ENCODE measurements at regions of chr9 and their contacts with region 1.

Region 1: GRCh38 chr9:129726322-129727160 is 26.3 kb downstream of the PTGES start:
- DNase-seq: peak; percentile 87
- CTCF ChIP-seq: peak; percentile 85

Region 2: DNA sequence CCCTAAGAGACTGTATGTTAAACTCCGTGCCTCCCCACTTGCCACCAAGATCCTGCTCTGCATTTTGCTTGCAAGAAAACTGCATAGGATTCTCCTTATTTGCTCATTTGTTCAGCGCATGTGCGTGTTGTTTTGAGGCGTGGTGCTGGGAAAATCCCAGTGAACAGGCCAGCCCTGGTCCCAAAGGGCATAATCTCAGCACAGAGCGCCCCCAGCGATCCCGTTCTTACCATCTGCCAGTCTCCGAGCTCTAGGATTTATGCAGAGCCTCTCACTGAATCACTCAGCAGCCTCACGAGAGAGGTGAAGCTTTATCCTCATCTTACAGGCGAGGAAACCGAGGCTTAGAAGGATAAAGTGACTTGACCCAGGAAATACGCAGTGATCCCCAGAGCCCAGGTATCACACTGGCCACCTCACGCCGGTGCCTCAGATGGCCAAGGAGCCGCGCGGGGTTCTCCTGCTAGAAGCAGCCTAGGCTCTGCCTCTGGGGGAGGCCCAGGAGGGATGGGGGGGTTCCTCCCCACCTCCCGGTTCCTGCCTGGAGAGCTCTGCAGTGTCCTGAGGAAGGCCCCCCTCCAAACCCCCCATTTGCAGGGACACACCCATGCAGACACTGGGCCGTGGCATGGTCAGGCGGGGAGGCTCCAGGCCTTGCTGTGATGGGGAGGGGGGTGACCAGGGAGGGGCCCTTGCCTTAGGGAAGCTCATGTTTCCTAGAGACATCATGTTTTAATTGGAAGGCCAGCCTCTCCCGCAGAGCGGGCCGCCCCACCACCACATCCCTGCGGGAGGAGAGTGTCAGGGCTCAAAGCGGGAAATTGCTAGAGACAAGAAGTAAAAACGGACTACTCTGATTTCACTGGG is 49.3 kb before region 1 on chr9:
- CTCF ChIA-PET with region 1: interaction called, 10 read pairs
- POLR2A ChIA-PET with region 1: no interaction called
- DNase-seq: no peak
- CTCF ChIP-seq: no peak

Region 3: GRCh38 chr9:129712634-129713401 is 13.7 kb before region 1 on chr9:
- CTCF ChIA-PET with region 1: interaction called, 10 read pairs
- POLR2A ChIA-PET with region 1: no interaction called
- DNase-seq: no peak
- CTCF ChIP-seq: no peak

Region 4: GRCh38 chr9:129737479-129738274 is 11.1 kb after region 1 on chr9:
- CTCF ChIA-PET with region 1: interaction called, 74 read pairs
- POLR2A ChIA-PET with region 1: no interaction called
- DNase-seq: peak; percentile 90
- CTCF ChIP-seq: peak; percentile 86

Region 5: DNA sequence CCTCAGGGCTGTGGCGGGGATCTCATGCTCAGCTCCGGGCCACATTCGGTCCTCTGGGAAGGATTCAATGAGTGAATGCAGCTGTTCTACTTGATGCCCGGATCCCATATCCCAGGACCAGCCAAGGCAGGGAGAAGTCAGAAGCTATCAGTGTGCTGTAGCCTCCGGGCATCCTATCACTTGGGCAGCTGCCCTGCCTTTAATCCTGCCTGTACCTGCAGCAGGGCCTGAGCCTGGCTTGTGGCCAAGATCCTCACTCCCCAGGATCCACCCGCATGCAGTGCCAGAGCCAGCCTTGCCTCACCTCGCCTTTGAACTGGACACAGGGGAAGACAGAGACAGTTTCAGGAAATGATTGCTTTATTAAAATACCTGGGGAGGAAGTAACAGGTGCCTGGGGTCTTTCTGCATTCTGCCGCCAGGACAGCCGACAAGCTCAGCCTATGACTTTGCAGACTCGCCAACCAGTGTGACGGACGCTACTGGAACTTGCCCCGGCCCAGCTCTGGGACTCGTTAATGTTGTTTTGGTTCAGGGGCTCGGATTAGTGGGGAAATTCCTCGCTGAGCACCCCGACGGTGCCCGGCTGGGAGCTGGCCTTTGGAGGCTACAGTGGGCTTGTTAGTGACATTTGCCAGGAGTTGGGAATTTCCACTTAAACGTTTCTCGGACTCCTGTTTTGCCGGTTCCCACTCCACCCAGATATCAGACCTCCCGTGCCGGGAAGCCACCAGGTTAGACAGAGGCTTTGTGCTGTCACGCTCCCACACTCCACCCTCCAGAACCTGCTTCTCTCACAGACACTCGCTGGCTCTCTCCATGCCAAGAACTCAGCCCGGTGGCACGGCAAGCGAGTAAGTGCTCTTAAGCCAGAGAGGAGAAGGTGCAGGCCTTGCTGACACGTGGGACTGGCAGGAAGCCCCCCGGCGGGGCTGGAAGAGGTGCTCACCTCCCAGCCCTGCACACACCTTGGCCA is 25.6 kb after region 1 on chr9:
- CTCF ChIA-PET with region 1: interaction called, 11 read pairs
- POLR2A ChIA-PET with region 1: no interaction called
- DNase-seq: no peak
- CTCF ChIP-seq: no peak

Region 6: DNA sequence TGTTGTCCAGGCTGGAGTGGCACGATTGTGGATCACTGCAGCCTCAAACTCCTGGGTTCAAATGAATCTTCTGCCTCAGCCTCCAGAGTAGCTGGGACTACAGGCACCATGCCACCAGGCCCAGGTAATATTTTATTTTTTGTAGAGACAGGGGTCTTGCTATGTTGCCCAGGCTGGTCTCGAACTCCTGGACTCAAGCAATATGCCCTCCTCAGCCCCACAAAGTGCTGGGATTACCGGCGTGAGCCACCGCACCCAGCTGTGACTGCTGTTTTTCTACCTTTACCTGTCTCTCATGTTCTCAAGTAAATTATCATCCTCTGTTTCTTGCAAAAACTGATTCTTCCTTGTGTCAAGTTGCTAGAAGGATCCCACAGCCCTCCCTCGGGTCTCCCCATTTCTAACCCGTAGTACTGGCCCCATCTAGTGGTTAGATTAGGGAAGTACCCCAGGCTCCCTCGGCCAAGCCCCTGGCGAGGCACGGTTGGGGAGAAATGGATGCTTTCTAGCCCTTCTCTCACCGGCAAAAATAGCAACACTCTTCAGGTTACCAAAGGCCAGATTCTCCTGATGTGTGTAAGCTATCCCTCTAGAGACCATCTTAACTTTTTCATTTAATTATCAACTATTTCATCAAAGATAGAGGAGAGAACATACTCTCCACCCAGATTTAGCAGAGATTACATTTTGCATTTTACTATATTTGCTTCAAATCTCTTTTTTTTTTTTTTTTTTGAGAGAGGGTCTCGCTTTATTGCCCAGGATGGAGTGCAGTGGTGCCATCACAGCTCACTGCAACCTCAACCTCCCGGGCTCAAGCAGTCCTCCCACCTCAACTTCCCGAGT is 57.2 kb after region 1 on chr9:
- CTCF ChIA-PET with region 1: interaction called, 66 read pairs
- POLR2A ChIA-PET with region 1: no interaction called
- DNase-seq: peak; percentile 88
- CTCF ChIP-seq: peak; percentile 70

Region 7: DNA sequence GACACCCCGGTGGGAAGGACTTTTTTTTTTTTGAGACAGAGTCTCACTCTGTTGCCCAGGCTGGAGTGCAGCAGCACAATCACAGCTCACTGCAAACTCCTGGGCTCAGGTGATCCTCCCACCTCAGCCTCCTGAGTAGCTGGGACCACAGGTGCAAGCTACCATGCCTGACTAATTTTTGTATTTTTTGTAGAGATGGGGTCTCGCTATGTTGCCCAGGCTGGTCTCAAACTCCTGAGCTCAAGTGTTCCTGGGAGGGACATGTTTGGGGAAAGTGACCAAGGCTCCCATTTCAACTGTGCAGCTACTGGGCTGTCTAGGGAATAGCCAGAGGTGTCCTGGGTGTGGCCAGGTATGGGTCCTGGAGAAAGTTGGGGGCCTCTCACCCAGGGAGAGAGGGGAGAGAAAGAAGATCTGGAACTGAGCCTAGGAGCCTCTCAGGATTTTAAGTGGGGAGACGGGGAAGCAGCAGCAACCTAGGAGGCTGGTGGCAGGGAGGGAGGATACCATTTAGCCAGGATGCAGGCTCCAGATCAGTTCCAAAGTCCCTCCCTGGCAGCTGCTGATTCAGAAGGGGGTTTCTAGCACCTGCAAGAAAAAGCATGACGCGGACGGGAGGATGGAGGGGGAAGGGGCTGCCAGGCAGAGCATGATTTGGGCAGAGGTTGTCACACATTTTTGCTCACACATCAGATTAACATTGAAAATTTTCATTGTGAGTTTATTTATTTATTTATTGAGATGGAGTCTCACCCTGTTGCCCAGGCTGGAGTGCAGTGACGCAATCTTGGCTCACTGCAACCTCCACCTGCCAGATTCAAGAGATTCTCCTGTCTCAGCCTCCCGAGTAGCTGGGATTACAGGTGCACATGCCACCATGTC is 69.7 kb after region 1 on chr9:
- CTCF ChIA-PET with region 1: interaction called, 21 read pairs
- POLR2A ChIA-PET with region 1: no interaction called
- DNase-seq: no peak
- CTCF ChIP-seq: no peak

Measured in GM10248 (cell line).